ENCODE measurements at regions of chr12 and their contacts with region 1.

Region 1: DNA sequence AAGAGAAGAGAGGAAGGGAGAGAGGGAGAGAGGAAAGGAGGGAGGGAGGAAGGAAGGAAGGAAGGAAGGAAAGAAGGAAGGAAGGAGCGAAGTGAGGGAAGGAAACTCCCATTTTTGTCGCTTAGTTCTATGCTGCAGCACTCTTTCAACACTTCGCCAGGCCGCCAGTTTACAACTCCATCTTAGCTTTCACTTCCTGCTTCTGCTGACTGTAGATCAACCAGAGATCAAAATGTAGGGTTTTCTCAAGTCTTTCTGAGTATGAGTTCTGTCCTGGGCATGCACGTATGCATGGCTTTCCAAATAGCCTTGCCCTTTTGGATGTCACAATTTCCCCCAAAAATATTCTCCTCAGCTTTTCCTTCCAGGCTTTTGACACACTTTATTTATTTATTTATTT is 723.4 kb downstream of the TRHDE start:
- DNase-seq: no peak
- ATAC-seq: no peak
- H3K4me3 ChIP-seq: no peak overlapping the region
- H3K4me3 Mint-ChIP-seq: no peak overlapping the region
- H3K27ac ChIP-seq: no peak overlapping the region
- H3K27ac Mint-ChIP-seq: no peak overlapping the region
- H3K4me1 ChIP-seq: no peaks in the 10 kb centered on the region
- H3K4me1 Mint-ChIP-seq: no peaks in the 10 kb centered on the region
- H3K27me3 ChIP-seq: no peaks in the 10 kb centered on the region
- H3K27me3 Mint-ChIP-seq: no peaks in the 10 kb centered on the region
- CTCF ChIP-seq: no peak

Region 2: GRCh38 chr12:72110937-72111650 is 884.5 kb before region 1 on chr12:
- CTCF ChIA-PET with region 1: no interaction called
- POLR2A ChIA-PET with region 1: no interaction called
- intact Hi-C with region 1: loop called in 1 of 2 experiments (anchors 10 kb)
- DNase-seq: no peak
- ATAC-seq: no peak
- H3K4me3 ChIP-seq: no peak overlapping the region
- H3K4me3 Mint-ChIP-seq: no peak overlapping the region
- H3K27ac ChIP-seq: no peak overlapping the region
- H3K27ac Mint-ChIP-seq: no peak overlapping the region
- H3K4me1 ChIP-seq: no peaks in the 10 kb centered on the region
- H3K4me1 Mint-ChIP-seq: no peaks in the 10 kb centered on the region
- H3K27me3 ChIP-seq: no peaks in the 10 kb centered on the region
- H3K27me3 Mint-ChIP-seq: no peaks in the 10 kb centered on the region
- CTCF ChIP-seq: no peak

Region 3: DNA sequence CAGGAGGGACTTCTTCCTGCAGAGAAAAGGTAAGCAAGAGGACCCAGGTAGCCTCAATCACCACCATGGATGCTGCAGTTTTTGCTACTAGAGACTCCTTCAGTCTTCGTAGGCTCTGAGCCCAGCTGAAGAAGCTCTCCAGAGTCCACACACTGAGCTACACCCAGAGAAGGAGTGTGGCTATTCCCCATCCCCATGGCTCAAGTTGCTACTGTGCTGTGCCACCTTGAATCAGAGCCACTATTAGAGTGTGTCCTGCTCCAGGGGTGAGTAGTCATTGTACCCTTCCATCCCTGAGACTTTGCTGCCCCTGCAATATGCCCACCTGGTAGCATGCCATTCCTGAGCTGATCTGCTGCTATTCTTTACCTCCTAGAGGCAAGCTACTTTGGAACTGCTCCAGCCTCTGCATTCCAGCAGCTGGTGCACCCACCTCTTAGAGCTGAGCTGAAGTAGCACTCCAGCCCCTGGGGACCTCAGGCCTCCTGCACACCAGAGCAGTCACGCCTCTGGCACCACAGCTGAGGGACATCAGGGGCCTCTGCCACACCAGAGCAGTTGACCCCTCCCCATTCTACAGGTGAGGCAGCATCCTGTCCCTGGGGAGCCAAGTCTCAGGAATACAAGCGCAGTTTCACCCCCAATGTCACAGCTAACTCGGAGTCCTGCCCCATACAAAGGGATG is 510.5 kb before region 1 on chr12:
- CTCF ChIA-PET with region 1: no interaction called
- POLR2A ChIA-PET with region 1: no interaction called
- intact Hi-C with region 1: no loop called
- DNase-seq: no peak
- ATAC-seq: no peak
- H3K4me3 ChIP-seq: no peak overlapping the region
- H3K4me3 Mint-ChIP-seq: no peak overlapping the region
- H3K27ac ChIP-seq: no peak overlapping the region
- H3K27ac Mint-ChIP-seq: no peak overlapping the region
- H3K4me1 ChIP-seq: no peaks in the 10 kb centered on the region
- H3K4me1 Mint-ChIP-seq: no peaks in the 10 kb centered on the region
- H3K27me3 ChIP-seq: no peaks in the 10 kb centered on the region
- H3K27me3 Mint-ChIP-seq: no peaks in the 10 kb centered on the region
- CTCF ChIP-seq: no peak

Region 4: DNA sequence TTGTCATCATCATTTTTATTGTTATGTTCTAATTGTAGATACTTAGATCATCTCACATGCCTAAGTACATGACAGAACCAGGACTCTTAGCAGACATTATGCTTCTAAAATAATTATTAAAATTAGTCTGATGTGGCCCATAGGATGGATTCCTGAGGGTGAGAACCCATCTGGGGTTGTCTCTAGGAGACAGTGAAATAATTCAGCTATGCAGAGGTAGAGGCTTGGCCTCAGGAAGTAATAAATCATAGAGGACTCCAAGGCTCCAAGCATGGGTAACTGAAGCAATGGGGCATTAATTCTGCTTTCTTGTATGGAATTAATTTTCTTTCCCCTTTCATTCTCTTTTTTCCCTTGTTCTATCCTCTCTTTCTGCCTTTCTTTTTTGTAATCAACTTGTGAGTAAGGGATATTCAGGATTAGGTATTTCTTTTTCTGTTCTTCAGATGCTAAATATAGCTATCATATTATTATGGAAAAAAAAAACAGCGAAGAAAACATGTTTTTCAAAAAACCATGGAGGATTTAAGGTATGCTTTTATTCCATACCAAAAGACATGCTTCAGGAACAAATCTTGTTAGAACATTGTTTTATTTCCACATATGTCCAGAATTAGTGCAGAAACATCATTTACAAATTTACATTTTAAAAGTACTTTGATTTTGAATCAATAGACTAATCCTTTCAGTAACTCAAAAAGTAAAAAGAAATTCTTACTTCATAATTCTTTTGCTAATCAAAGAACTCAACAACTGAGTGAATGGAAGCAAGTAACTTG is 460.2 kb before region 1 on chr12:
- CTCF ChIA-PET with region 1: no interaction called
- POLR2A ChIA-PET with region 1: no interaction called
- intact Hi-C with region 1: no loop called
- DNase-seq: no peak
- ATAC-seq: no peak
- H3K4me3 ChIP-seq: no peak overlapping the region
- H3K4me3 Mint-ChIP-seq: no peak overlapping the region
- H3K27ac ChIP-seq: no peak overlapping the region
- H3K27ac Mint-ChIP-seq: no peak overlapping the region
- H3K4me1 ChIP-seq: no peaks in the 10 kb centered on the region
- H3K4me1 Mint-ChIP-seq: no peaks in the 10 kb centered on the region
- H3K27me3 ChIP-seq: no peaks in the 10 kb centered on the region
- H3K27me3 Mint-ChIP-seq: no peaks in the 10 kb centered on the region
- CTCF ChIP-seq: no peak

Region 5: GRCh38 chr12:72723732-72724131 is 271.9 kb before region 1 on chr12:
- CTCF ChIA-PET with region 1: no interaction called
- POLR2A ChIA-PET with region 1: no interaction called
- intact Hi-C with region 1: no loop called
- DNase-seq: no peak
- ATAC-seq: no peak
- H3K4me3 ChIP-seq: no peak overlapping the region
- H3K4me3 Mint-ChIP-seq: no peak overlapping the region
- H3K27ac ChIP-seq: no peak overlapping the region
- H3K27ac Mint-ChIP-seq: no peak overlapping the region
- H3K4me1 ChIP-seq: no peaks in the 10 kb centered on the region
- H3K4me1 Mint-ChIP-seq: no peaks in the 10 kb centered on the region
- H3K27me3 ChIP-seq: no peaks in the 10 kb centered on the region
- H3K27me3 Mint-ChIP-seq: no peaks in the 10 kb centered on the region
- CTCF ChIP-seq: no peak

Region 6: GRCh38 chr12:73057426-73057825 is 61.8 kb after region 1 on chr12:
- CTCF ChIA-PET with region 1: no interaction called
- POLR2A ChIA-PET with region 1: no interaction called
- intact Hi-C with region 1: no loop called
- DNase-seq: no peak
- ATAC-seq: no peak
- H3K4me3 ChIP-seq: no peak overlapping the region
- H3K4me3 Mint-ChIP-seq: no peak overlapping the region
- H3K27ac ChIP-seq: no peak overlapping the region
- H3K27ac Mint-ChIP-seq: no peak overlapping the region
- H3K4me1 ChIP-seq: no peaks in the 10 kb centered on the region
- H3K4me1 Mint-ChIP-seq: no peaks in the 10 kb centered on the region
- H3K27me3 ChIP-seq: no peaks in the 10 kb centered on the region
- H3K27me3 Mint-ChIP-seq: no peaks in the 10 kb centered on the region
- CTCF ChIP-seq: no peak

Measured in CD8-positive, alpha-beta T cell (primary cell).